Activated naive CD8-positive, alpha-beta T cell treated with anti-CD3 and anti-CD28 coated beads, Interleukin-2, amount 10 ng/mL, durations not matched to agents 7 days and 5 days (primary cell): ENCODE measurements at regions of chr2 and their contacts with region 1.

Region 1: DNA sequence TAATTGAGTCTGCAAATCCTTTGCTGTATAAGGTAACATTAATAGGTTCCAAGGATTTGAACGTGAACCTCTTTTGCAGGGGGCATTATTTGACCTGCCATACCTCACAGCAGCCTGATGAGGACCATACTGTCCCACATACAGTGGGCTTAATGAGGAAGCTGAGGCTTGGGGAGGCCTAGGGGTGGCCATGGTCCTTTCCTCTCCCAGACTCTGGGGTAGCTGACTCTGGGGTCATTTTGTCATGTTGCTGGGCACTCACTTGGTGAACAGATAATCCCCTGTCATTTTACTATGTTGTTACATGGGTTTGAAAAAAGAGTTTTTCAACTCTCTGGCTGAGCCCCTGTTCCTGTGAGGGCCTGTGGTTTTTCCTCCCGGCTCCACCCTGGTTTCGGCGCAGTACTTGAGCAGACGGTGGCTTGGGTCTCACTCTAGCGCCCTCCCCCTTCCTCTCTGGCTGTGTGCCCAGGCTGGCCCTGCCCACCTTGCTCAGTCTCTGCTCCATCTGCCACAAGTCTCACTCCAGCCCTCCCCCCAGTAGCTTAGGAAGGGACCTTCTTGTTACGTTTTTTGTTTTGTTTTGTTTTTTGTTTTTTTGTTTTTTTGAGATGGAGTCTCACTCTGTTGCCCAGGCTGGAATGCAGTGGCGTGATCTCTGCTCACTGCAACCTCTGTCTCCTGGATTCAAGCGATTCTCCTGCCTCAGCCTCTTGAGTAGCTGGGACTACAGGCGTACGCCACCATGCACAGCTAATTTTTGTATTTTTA is 21.0 kb downstream of the INPP4A start:
- DNase-seq: peak; percentile 69
- ATAC-seq: peak; percentile 51
- H3K4me3 Mint-ChIP-seq: peak overlapping the region; percentile 81
- H3K27ac Mint-ChIP-seq: peak overlapping the region; percentile 93
- H3K4me1 Mint-ChIP-seq: peaks cover 78% of the 10 kb centered on the region
- H3K27me3 Mint-ChIP-seq: no peaks in the 10 kb centered on the region

Region 2: DNA sequence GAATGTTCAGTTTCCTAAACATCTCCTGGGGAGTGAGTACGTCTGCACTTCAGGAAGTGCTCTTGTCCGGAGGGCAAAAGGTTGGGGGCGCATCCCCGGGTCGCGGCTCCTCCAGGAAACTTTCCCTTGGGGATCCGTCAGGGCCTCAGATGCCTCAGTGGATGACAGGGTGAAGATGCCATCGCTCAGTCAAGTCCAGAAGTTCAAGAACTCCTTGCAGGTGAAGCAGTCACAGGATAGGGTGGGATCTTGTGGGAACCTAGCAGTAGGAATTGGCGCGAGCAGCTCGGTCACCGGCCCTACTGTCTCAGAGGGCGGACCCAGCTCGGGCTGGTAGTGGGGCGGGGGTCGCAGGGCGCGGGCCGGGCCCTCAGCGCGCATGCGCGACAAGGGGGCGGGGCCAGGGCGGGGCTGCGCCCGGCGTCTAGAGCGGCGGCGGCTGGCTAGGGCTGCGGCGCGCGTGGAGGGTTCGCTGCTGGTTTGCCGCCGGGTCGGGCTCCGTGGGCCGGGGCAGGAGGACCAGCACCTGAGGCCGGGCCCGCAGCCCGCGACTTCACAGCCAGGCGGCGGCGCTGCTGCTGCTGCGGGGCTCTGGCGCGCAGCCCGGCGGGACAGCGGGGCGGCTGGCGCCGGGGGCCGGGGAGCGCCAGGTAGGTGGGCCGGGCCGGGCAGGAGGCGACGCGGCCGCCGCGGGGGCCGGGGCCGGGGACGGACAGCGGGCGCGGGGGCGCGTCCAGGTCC is 21.0 kb before region 1 on chr2 and contains the start of gene INPP4A:
- POLR2A ChIA-PET with region 1: interaction called, 75 read pairs
- DNase-seq: peak; percentile 88
- ATAC-seq: peak; percentile 69
- H3K4me3 Mint-ChIP-seq: peak within 1 kb of the TSS; percentile 96
- H3K27ac Mint-ChIP-seq: peak within 1 kb of the TSS; percentile 95
- H3K4me1 Mint-ChIP-seq: peaks cover 32% of the 10 kb centered on the region
- H3K27me3 Mint-ChIP-seq: no peaks in the 10 kb centered on the region
- total RNA-seq, gene INPP4A: 147 to 159 TPM

Region 3: DNA sequence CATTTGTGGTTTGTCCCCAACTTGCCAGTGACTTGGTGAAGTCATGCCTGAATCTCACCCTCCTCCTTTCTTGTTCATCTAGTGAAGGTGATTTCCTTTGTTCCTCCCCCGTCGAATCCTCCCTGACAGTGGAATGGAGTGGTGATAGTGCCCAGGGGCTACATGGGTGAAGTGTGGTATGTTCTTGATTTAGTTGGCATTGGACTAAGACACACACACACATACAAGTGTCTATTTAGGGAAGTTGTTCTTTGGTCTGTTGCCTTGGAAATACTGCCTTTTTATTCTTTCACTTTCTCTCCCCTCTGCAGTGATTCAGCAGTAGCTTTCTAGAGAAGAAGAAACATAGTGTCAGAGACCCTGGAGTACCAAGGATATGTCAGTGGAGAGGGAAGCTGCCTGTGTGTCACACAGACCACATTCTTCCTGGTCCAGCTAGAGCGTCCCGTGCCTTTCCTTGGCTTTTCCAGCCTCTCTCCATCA is 10.1 kb before region 1 on chr2:
- POLR2A ChIA-PET with region 1: interaction called, 75 read pairs
- DNase-seq: no peak
- ATAC-seq: peak; percentile 26
- H3K4me3 Mint-ChIP-seq: peak overlapping the region; percentile 79
- H3K27ac Mint-ChIP-seq: peak overlapping the region; percentile 87
- H3K4me1 Mint-ChIP-seq: peaks cover 92% of the 10 kb centered on the region
- H3K27me3 Mint-ChIP-seq: no peaks in the 10 kb centered on the region

Region 4: DNA sequence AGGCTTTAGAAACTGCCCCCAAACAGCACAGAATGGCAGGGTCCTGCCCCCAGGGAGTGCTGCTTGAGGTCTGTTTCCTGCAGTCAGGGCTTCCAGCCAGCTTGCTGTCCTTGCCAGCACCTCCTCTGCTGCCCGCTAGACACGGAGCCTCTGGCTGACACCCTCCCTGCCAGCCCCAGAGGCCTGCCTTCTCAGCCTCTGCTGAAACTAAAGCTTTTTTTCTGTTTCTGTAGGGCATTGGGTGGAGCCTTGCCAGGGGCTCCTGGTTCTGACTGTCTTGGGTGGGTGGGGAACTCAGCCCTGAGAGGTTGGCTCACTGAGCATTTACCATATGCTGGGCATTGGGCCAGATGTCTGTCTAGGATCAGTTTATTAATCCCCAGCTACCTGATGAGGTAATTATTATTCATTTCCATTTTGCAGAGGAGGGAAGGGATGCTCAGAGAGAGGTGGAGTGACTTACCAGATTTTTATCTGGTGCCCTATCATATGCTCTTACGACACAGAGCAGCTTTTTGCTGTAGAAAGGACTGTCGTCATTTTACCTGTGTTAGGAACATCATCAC is 14.4 kb after region 1 on chr2:
- POLR2A ChIA-PET with region 1: interaction called, 171 read pairs
- DNase-seq: no peak
- ATAC-seq: peak; percentile 50
- H3K4me3 Mint-ChIP-seq: peak overlapping the region; percentile 74
- H3K27ac Mint-ChIP-seq: peak overlapping the region; percentile 95
- H3K4me1 Mint-ChIP-seq: peaks cover 88% of the 10 kb centered on the region
- H3K27me3 Mint-ChIP-seq: no peaks in the 10 kb centered on the region

Region 5: DNA sequence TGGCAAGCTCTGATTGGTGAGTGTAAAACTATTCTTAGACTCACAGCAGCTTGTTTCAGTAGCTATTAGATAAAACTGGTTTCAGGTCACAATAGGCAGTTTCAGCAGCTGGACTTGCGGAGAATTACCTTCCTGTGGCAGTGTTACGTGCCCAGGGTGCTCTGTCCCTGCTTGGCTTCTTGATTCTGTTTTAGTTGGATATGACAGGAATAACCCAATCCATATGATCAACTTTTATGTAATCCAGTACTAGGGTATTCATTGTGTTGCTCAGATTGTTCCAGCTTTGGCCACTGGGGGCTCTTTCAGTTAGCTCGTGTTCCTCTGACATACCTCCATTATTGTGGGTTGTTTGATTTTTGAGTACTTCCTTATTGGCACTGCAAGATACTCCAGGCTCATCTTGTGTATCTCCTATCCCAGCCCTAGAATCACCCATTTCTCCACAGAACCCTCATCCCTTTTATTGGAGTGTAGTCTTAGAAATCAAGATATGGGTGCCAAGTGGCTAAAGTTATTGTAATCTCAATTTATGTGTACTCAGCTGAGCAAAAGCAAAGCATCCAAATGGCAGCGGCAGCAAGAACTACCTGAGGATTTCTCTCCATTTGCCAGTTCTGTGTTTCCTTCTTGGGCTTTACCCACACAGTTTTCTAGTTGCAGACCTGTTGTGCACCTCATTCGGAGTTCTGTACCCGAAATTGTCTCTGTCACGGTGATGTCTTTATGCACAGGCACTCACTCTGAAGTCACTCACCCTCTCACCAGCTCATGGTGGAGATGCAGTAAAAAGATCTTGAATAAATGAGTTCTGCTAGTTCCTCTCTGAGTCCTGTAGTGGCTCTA is 22.4 kb after region 1 on chr2:
- POLR2A ChIA-PET with region 1: interaction called, 171 read pairs
- DNase-seq: no peak
- ATAC-seq: peak; percentile 40
- H3K4me3 Mint-ChIP-seq: no peak overlapping the region
- H3K27ac Mint-ChIP-seq: peak overlapping the region; percentile 58
- H3K4me1 Mint-ChIP-seq: peaks cover 73% of the 10 kb centered on the region
- H3K27me3 Mint-ChIP-seq: no peaks in the 10 kb centered on the region